ENCODE measurements at regions of chr5 and their contacts with region 1.

Region 1: GRCh38 chr5:131634996-131635754 is at the start of gene RAPGEF6:
- DNase-seq: peak; percentile 98
- ATAC-seq: peak; percentile 97
- total RNA-seq, gene RAPGEF6: 7.8 TPM

Region 2: GRCh38 chr5:131796793-131797693 is 161.9 kb after region 1 on chr5 and contains the start of gene FNIP1:
- intact Hi-C with region 1: loop called (anchors 10 kb)
- DNase-seq: peak; percentile 100
- ATAC-seq: peak; percentile 97
- total RNA-seq, gene FNIP1: 33.8 TPM

Measured in left ventricle myocardium superior (tissue), 1 donor.